WTC11 (cell line): ENCODE measurements at regions of chr12 and their contacts with region 1.

Region 1: GRCh38 chr12:57261428-57261865 is 10.5 kb upstream of the STAC3 start:
- DNase-seq: no peak
- ATAC-seq: peak; percentile 73
- H3K4me3 Mint-ChIP-seq: no peak overlapping the region
- H3K27ac Mint-ChIP-seq: no peak overlapping the region
- H3K4me1 Mint-ChIP-seq: peaks cover 12% of the 10 kb centered on the region
- H3K27me3 Mint-ChIP-seq: no peaks in the 10 kb centered on the region
- CTCF ChIP-seq: no peak

Region 2: GRCh38 chr12:57248934-57249742 is 12.3 kb before region 1 on chr12:
- CTCF ChIA-PET with region 1: interaction called, 23 read pairs
- POLR2A ChIA-PET with region 1: no interaction called
- DNase-seq: peak; percentile 7
- ATAC-seq: peak; percentile 6; the same call in 1 of the 2 replicates
- H3K4me3 Mint-ChIP-seq: no peak overlapping the region
- H3K27ac Mint-ChIP-seq: peak overlapping the region; percentile 11; the same call in 1 of the 2 replicates
- H3K4me1 Mint-ChIP-seq: peaks cover 50% of the 10 kb centered on the region
- H3K27me3 Mint-ChIP-seq: peaks cover 10% of the 10 kb centered on the region
- CTCF ChIP-seq: no peak

Region 3: GRCh38 chr12:57276935-57277563 is 15.6 kb after region 1 on chr12:
- CTCF ChIA-PET with region 1: interaction called, 15 read pairs
- POLR2A ChIA-PET with region 1: interaction called, 3 read pairs
- DNase-seq: peak; percentile 46
- ATAC-seq: peak; percentile 57
- H3K4me3 Mint-ChIP-seq: no peak overlapping the region
- H3K27ac Mint-ChIP-seq: no peak overlapping the region
- H3K4me1 Mint-ChIP-seq: peaks cover 13% of the 10 kb centered on the region
- H3K27me3 Mint-ChIP-seq: no peaks in the 10 kb centered on the region
- CTCF ChIP-seq: no peak